ENCODE measurements at regions of chr17 and their contacts with region 1.

Region 1: DNA sequence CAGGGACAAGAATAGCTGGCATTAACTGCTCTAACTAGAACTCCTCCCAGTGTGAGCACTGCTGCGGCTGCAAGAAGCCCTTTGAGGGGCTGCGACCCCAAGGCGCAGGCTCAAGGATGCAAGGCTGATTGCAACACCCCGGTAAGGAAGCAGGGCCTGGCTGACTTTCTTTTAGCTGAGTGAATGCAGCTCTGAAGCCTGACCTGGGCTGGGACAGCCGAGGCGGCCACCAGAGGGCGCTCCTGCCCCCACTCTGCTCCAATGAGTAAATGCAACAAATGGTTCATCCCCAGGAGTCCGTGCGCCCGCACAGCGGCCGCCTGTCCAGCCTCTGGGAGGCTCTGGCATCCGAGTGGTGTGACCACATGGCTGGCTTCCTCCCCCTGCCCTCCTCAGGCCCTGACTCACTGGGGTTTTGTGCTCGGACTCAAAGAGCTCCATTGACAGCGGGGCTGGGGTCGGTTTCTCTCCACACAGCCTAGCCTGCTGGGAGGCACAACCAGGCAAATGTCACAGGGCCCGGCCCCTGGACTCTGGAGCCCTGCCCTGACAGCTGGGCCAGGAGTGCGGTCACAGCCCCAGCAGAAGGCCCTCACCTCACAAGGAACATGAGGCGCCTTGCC is at the start of gene SMIM5:
- DNase-seq: peak; percentile 85 to 96 (median 91)
- H3K4me3 ChIP-seq: no peak within 1 kb of the TSS
- H3K27ac ChIP-seq: peak within 1 kb of the TSS in 4 of 5 donors; percentile 51 to 80 (median 70)
- H3K4me1 ChIP-seq: peaks cover 14 to 18% of the 10 kb centered on the region in 2 donors
- H3K27me3 ChIP-seq: no peaks in the 10 kb centered on the region
- CTCF ChIP-seq: peak; percentile 81 to 99 (median 92)
- POLR2A ChIP-seq: no peak
- total RNA-seq, gene SMIM5: 0.17 to 1.1 (median 0.55) TPM in 5 of 9 donors, not detected in the others

Region 2: GRCh38 chr17:75749545-75750389 is 116.8 kb after region 1 on chr17:
- intact Hi-C with region 1: loop called in 1 of 2 experiments (anchors 5 kb)
- DNase-seq: peak; percentile 81 to 96 (median 91)
- H3K4me3 ChIP-seq: no peak overlapping the region
- H3K27ac ChIP-seq: peak overlapping the region in 1 of 5 donors; percentile 23
- H3K4me1 ChIP-seq: peaks cover 11 to 19% of the 10 kb centered on the region in 2 donors
- H3K27me3 ChIP-seq: no peaks in the 10 kb centered on the region
- CTCF ChIP-seq: peak; percentile 83 to 97 (median 93)
- POLR2A ChIP-seq: no peak

Region 3: DNA sequence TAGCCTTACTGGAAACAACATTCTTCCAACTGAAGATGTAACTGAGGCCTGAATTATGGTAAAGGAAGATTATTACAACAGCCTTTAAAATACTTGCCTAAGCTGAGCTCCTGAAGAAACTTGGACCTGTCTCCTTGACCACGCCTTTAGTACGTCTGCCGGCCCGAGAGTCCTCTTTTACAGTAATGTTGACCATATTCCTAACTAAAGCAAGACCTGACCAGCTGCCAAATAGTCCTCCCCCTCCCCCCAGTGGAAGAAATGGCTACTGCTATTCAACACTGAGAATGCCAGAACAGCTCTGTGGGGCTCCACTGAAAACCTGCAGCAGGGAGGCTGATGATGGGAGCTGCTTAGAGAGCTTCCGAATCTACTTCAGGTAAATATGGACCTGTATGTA is 520.7 kb after region 1 on chr17:
- intact Hi-C with region 1: no loop called
- DNase-seq: no peak
- H3K4me3 ChIP-seq: no peak overlapping the region
- H3K27ac ChIP-seq: no peak overlapping the region
- H3K4me1 ChIP-seq: no peaks in the 10 kb centered on the region
- H3K27me3 ChIP-seq: no peaks in the 10 kb centered on the region
- CTCF ChIP-seq: no peak
- POLR2A ChIP-seq: no peak